ENCODE measurements at regions of chr9 and their contacts with region 1.

Region 1: DNA sequence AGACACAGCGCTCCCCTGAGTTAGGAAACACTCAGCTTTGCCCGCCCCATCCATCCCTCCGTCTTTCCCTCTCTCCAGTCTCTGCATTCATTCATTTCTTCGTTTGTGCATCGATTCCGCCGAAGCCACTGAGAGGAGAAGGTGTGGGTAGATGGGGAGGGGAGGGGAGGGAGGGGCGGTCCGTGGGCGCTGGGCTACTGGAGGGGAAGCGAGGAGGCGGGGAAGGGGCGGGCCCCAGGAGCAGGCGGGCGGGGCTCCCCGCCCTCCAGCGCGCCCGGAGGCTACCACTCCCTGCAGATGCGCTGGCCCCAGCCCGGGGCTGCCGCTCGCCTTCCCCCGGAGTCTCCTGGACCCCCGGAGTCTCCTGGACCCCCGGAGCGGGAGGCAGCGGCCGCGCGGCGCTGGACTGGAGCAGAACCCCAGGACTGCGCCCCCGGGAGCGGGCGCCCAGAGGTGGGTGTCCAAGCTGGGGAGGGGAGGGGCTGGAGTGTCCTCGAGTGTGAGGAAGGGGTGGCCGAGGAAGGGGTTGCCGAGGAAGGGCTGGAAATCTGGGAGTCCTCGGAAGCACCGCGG is 159.5 kb downstream of the C9orf152 start:
- DNase-seq: peak; percentile 43 to 88 (median 71)
- ATAC-seq: peak; percentile 97
- H3K4me3 ChIP-seq: peak overlapping the region; percentile 83
- H3K4me3 Mint-ChIP-seq: peak overlapping the region; percentile 87 to 99 (median 92)
- H3K27ac ChIP-seq: no peak overlapping the region
- H3K27ac Mint-ChIP-seq: peak overlapping the region in 8 of 9 donors; percentile 54 to 90 (median 70)
- H3K4me1 ChIP-seq: peaks cover 5 to 10% of the 10 kb centered on the region in 2 donors
- H3K4me1 Mint-ChIP-seq: peaks cover 23 to 55% (median 38%) of the 10 kb centered on the region in 7 donors
- H3K27me3 ChIP-seq: no peaks in the 10 kb centered on the region
- H3K27me3 Mint-ChIP-seq: peaks cover 0 to 16% (median 11%) of the 10 kb centered on the region in 5 donors

Region 2: GRCh38 chr9:109012876-109013678 is 1035.4 kb before region 1 on chr9 and contains the start of gene CTNNAL1:
- CTCF ChIA-PET with region 1: no interaction called
- POLR2A ChIA-PET with region 1: no interaction called
- intact Hi-C with region 1: loop called in 1 of 2 experiments (anchors 5 kb)
- DNase-seq: peak; percentile 68 to 88 (median 78)
- ATAC-seq: peak; percentile 98
- H3K4me3 ChIP-seq: peak within 1 kb of the TSS; percentile 72
- H3K4me3 Mint-ChIP-seq: peak within 1 kb of the TSS; percentile 93 to 99 (median 97)
- H3K27ac ChIP-seq: peak within 1 kb of the TSS; percentile 77
- H3K27ac Mint-ChIP-seq: peak within 1 kb of the TSS; percentile 79 to 95 (median 92)
- H3K4me1 ChIP-seq: peaks cover 6 to 13% of the 10 kb centered on the region in 2 donors
- H3K4me1 Mint-ChIP-seq: peaks cover 17 to 34% (median 21%) of the 10 kb centered on the region in 7 donors
- H3K27me3 ChIP-seq: no peaks in the 10 kb centered on the region
- H3K27me3 Mint-ChIP-seq: peaks cover 0 to 22% (median 4%) of the 10 kb centered on the region in 5 donors
- total RNA-seq, gene CTNNAL1: 1.1 to 9.9 (median 2.5) TPM

Region 3: GRCh38 chr9:109918339-109919163 is 129.9 kb before region 1 on chr9:
- CTCF ChIA-PET with region 1: interaction called, 5 read pairs
- POLR2A ChIA-PET with region 1: interaction called, 3 read pairs
- intact Hi-C with region 1: loop called in 1 of 2 experiments (anchors 1 kb)
- DNase-seq: peak in 6 of 9 donors; percentile 7 to 55 (median 18)
- ATAC-seq: no peak
- H3K4me3 ChIP-seq: peak overlapping the region; percentile 20
- H3K4me3 Mint-ChIP-seq: peak overlapping the region; percentile 37 to 88 (median 65)
- H3K27ac ChIP-seq: no peak overlapping the region
- H3K27ac Mint-ChIP-seq: peak overlapping the region; percentile 2 to 96 (median 60)
- H3K4me1 ChIP-seq: peaks cover 0 to 14% of the 10 kb centered on the region in 2 donors
- H3K4me1 Mint-ChIP-seq: peaks cover 9 to 56% (median 22%) of the 10 kb centered on the region in 7 donors
- H3K27me3 ChIP-seq: no peaks in the 10 kb centered on the region
- H3K27me3 Mint-ChIP-seq: peaks cover 0 to 5% (median 0%) of the 10 kb centered on the region in 5 donors

Region 4: GRCh38 chr9:110007477-110008270 is 40.8 kb before region 1 on chr9:
- CTCF ChIA-PET with region 1: interaction called, 4 read pairs
- POLR2A ChIA-PET with region 1: no interaction called
- intact Hi-C with region 1: loop called (anchors 2 kb)
- DNase-seq: no peak
- ATAC-seq: no peak
- H3K4me3 ChIP-seq: no peak overlapping the region
- H3K4me3 Mint-ChIP-seq: peak overlapping the region in 1 of 10 donors; percentile 76
- H3K27ac ChIP-seq: no peak overlapping the region
- H3K27ac Mint-ChIP-seq: peak overlapping the region in 4 of 9 donors; percentile 8 to 81 (median 29)
- H3K4me1 ChIP-seq: peaks cover 0 to 6% of the 10 kb centered on the region in 2 donors
- H3K4me1 Mint-ChIP-seq: peaks cover 11 to 39% (median 25%) of the 10 kb centered on the region in 7 donors
- H3K27me3 ChIP-seq: no peaks in the 10 kb centered on the region
- H3K27me3 Mint-ChIP-seq: peaks cover 0 to 17% (median 0%) of the 10 kb centered on the region in 5 donors

Region 5: DNA sequence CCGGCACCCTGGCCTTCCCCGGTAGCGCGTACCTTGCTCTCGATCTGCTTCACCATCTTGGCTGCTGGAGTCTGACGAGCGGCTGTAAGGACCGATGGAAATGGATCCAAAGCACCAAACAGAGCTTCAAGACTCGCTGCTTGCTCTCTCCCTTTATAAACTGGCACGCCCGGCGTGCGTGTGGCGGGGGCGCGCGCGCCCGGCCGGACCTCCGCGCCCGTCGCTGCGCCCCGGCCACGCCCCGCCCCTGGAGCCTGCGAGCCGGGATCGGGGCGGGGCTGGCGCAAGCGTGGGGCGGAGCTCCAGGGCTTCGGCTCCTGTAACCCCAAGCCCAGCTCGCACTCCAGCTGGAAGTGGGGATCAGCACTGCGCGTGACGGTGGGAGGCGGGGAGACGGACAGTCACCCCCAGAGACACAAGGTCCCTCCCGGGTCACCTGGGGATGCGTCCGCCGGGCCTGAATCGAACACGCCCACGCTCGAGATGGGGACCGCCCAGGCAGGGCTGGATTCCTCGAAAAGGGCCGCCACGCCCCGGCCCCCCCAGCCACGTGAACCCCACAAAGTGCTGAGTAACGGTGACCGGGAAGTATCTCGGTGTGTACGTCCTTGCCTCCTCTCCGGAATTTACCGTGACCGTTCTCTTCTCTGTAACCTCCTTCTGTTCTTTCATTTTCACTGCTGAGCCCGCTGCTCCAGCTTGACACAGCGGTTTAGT is 208.0 kb after region 1 on chr9 and contains the start of gene TXN:
- CTCF ChIA-PET with region 1: no interaction called
- POLR2A ChIA-PET with region 1: no interaction called
- intact Hi-C with region 1: loop called (anchors 1 to 5 kb)
- DNase-seq: peak; percentile 56 to 91 (median 74)
- ATAC-seq: peak; percentile 88
- H3K4me3 ChIP-seq: peak within 1 kb of the TSS; percentile 85
- H3K4me3 Mint-ChIP-seq: peak within 1 kb of the TSS; percentile 83 to 99 (median 96)
- H3K27ac ChIP-seq: peak within 1 kb of the TSS; percentile 65
- H3K27ac Mint-ChIP-seq: peak within 1 kb of the TSS; percentile 87 to 97 (median 89)
- H3K4me1 ChIP-seq: peaks cover 4 to 11% of the 10 kb centered on the region in 2 donors
- H3K4me1 Mint-ChIP-seq: peaks cover 16 to 52% (median 32%) of the 10 kb centered on the region in 7 donors
- H3K27me3 ChIP-seq: no peaks in the 10 kb centered on the region
- H3K27me3 Mint-ChIP-seq: peaks cover 0 to 5% (median 0%) of the 10 kb centered on the region in 5 donors
- total RNA-seq, gene TXN: 22.2 to 276 (median 24.9) TPM

Region 6: DNA sequence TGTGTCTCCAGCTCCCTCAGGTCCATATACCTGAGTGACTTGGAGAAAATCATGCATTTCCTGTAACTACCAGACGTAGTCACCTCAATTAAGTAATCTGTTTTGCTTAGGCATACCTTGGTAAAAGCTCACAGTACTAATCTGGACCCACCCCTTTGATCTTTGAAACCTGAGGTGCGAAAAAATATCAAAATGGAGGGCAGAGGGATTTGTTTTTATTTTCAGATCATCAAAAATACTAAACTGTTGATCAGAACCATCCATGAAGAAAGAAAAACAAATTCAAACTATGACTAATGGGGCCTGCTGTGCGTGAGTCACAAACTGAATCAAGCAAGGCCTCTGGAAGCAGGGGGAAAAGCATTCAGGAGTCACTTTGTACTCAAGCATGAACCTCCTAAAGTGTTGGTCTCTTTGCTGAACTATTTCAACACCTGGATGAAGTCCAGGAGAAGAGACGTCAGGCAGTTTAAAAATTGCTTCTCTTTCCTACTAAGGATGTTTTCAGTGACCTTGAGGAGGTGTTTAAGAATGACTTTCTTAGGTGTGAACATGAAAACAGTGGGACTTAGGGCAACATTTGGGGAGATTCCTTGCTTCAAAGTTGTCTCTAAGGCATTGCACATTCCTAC is 696.4 kb after region 1 on chr9:
- CTCF ChIA-PET with region 1: no interaction called
- POLR2A ChIA-PET with region 1: no interaction called
- intact Hi-C with region 1: no loop called
- DNase-seq: no peak
- ATAC-seq: no peak
- H3K4me3 ChIP-seq: no peak overlapping the region
- H3K4me3 Mint-ChIP-seq: no peak overlapping the region
- H3K27ac ChIP-seq: no peak overlapping the region
- H3K27ac Mint-ChIP-seq: no peak overlapping the region
- H3K4me1 ChIP-seq: no peaks in the 10 kb centered on the region
- H3K4me1 Mint-ChIP-seq: no peaks in the 10 kb centered on the region
- H3K27me3 ChIP-seq: no peaks in the 10 kb centered on the region
- H3K27me3 Mint-ChIP-seq: no peaks in the 10 kb centered on the region

Measured in naive thymus-derived CD4-positive, alpha-beta T cell (primary cell).